CD8-positive, alpha-beta memory T cell (primary cell): ENCODE measurements at regions of chr12 and their contacts with region 1.

Region 1: DNA sequence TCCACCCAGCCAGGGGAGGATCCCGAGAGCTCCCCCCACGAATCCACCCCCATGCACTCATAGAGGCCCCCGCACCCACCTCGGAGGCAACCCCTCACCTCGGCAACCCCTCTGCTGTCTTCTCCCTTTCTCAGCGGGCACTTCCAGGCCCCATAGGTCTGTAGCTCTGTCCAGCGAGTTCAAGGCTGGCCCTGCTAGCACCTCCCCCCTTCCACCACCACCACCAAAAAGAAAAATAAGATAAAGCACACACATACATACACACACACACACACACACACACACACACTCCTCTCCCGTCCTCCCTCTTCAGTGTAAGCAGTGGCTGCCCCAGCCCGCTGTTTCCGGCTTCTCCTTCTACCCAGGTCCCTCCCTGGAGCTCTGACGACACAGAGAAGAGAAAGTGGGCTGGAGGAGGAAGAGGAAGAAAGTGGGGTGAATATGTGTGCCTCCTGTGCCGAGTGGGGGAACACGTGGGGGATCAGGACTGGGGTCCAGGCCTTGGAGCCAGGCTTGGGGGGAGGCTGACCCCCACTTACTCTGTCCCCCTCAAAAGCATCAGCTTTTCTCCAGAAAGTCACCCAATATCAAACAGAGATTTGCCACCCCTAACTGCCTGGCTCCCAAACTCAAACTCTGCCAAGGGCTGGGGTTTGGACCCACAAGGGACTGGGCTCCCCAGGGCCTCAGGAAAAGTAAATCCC is at the start of gene STAT6:
- DNase-seq: peak; percentile 76 to 93 (median 88)
- H3K4me3 ChIP-seq: peak within 1 kb of the TSS; percentile 99
- H3K4me3 Mint-ChIP-seq: peak within 1 kb of the TSS; percentile 96 to 100 (median 99)
- H3K27ac ChIP-seq: peak within 1 kb of the TSS; percentile 96
- H3K27ac Mint-ChIP-seq: peak within 1 kb of the TSS; percentile 95 to 100 (median 98)
- H3K4me1 ChIP-seq: peaks cover 32% of the 10 kb centered on the region
- H3K4me1 Mint-ChIP-seq: peaks cover 38 to 53% (median 50%) of the 10 kb centered on the region in 3 donors
- H3K27me3 ChIP-seq: no peaks in the 10 kb centered on the region
- H3K27me3 Mint-ChIP-seq: peaks cover 0 to 9% of the 10 kb centered on the region in 2 donors
- total RNA-seq, gene STAT6: 262 to 265 TPM

Region 2: GRCh38 chr12:56839915-56840325 is 271.3 kb before region 1 on chr12:
- CTCF ChIA-PET with region 1: no interaction called
- POLR2A ChIA-PET with region 1: no interaction called
- DNase-seq: peak in 1 of 5 donors; percentile 4
- H3K4me3 ChIP-seq: no peak overlapping the region
- H3K4me3 Mint-ChIP-seq: no peak overlapping the region
- H3K27ac ChIP-seq: no peak overlapping the region
- H3K27ac Mint-ChIP-seq: peak overlapping the region in 1 of 8 donors; percentile 33
- H3K4me1 ChIP-seq: peaks cover 14% of the 10 kb centered on the region
- H3K4me1 Mint-ChIP-seq: peaks cover 15 to 17% (median 16%) of the 10 kb centered on the region in 3 donors
- H3K27me3 ChIP-seq: no peaks in the 10 kb centered on the region
- H3K27me3 Mint-ChIP-seq: peaks cover 7 to 9% of the 10 kb centered on the region in 2 donors

Region 3: GRCh38 chr12:57005980-57006808 is 105.0 kb before region 1 on chr12 and contains the start of gene ZBTB39:
- CTCF ChIA-PET with region 1: interaction called, 19 read pairs
- POLR2A ChIA-PET with region 1: interaction called, 10 read pairs
- DNase-seq: peak; percentile 61 to 78 (median 65)
- H3K4me3 ChIP-seq: peak within 1 kb of the TSS; percentile 66
- H3K4me3 Mint-ChIP-seq: peak within 1 kb of the TSS; percentile 88 to 96 (median 92)
- H3K27ac ChIP-seq: peak within 1 kb of the TSS; percentile 55
- H3K27ac Mint-ChIP-seq: peak within 1 kb of the TSS; percentile 84 to 96 (median 90)
- H3K4me1 ChIP-seq: peaks cover 56% of the 10 kb centered on the region
- H3K4me1 Mint-ChIP-seq: peaks cover 47 to 68% (median 63%) of the 10 kb centered on the region in 3 donors
- H3K27me3 ChIP-seq: no peaks in the 10 kb centered on the region
- H3K27me3 Mint-ChIP-seq: no peaks in the 10 kb centered on the region
- total RNA-seq, gene ZBTB39: 9.1 to 9.3 TPM

Region 4: DNA sequence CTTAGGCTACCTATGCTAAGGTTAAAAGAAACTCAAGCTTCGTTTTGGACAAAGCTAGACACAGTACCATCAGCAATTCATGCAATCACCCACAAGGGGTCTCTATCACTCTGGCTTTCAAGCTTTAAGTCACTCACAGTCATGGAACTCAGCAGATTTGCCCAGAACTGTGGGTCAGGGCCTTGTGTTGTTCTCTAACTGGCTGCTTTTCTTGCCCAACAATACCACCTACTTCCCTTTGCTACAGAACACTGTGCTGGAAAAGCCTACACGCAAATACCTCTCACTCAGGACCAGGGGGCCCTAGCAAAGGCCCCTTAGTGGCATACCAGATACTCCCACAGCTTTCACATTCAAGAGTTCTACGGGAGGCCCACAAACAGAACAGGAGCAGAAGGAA is 41.7 kb before region 1 on chr12:
- CTCF ChIA-PET with region 1: interaction called, 183 read pairs
- POLR2A ChIA-PET with region 1: interaction called, 75 read pairs
- DNase-seq: peak; percentile 33 to 75 (median 63)
- H3K4me3 ChIP-seq: no peak overlapping the region
- H3K4me3 Mint-ChIP-seq: peak overlapping the region in 2 of 7 donors; percentile 1 to 21
- H3K27ac ChIP-seq: no peak overlapping the region
- H3K27ac Mint-ChIP-seq: peak overlapping the region; percentile 64 to 97 (median 75)
- H3K4me1 ChIP-seq: peaks cover 19% of the 10 kb centered on the region
- H3K4me1 Mint-ChIP-seq: peaks cover 10 to 28% (median 20%) of the 10 kb centered on the region in 3 donors
- H3K27me3 ChIP-seq: no peaks in the 10 kb centered on the region
- H3K27me3 Mint-ChIP-seq: no peaks in the 10 kb centered on the region

Region 5: GRCh38 chr12:57088459-57089248 is 22.5 kb before region 1 on chr12 and contains the start of gene NAB2:
- CTCF ChIA-PET with region 1: interaction called, 195 read pairs
- POLR2A ChIA-PET with region 1: interaction called, 131 read pairs
- DNase-seq: peak; percentile 90 to 96 (median 93)
- H3K4me3 ChIP-seq: peak within 1 kb of the TSS; percentile 92
- H3K4me3 Mint-ChIP-seq: peak within 1 kb of the TSS; percentile 92 to 98 (median 94)
- H3K27ac ChIP-seq: peak within 1 kb of the TSS; percentile 93
- H3K27ac Mint-ChIP-seq: peak within 1 kb of the TSS; percentile 91 to 100 (median 99)
- H3K4me1 ChIP-seq: peaks cover 35% of the 10 kb centered on the region
- H3K4me1 Mint-ChIP-seq: peaks cover 44 to 61% (median 52%) of the 10 kb centered on the region in 3 donors
- H3K27me3 ChIP-seq: no peaks in the 10 kb centered on the region
- H3K27me3 Mint-ChIP-seq: no peaks in the 10 kb centered on the region
- total RNA-seq, gene NAB2: 37.7 to 40.1 TPM

Region 6: GRCh38 chr12:57124259-57124877 is 13.2 kb after region 1 on chr12:
- CTCF ChIA-PET with region 1: interaction called, 63 read pairs
- POLR2A ChIA-PET with region 1: interaction called, 9 read pairs
- DNase-seq: peak; percentile 64 to 84 (median 70)
- H3K4me3 ChIP-seq: no peak overlapping the region
- H3K4me3 Mint-ChIP-seq: peak overlapping the region in 2 of 7 donors; percentile 6 to 7
- H3K27ac ChIP-seq: no peak overlapping the region
- H3K27ac Mint-ChIP-seq: peak overlapping the region in 1 of 8 donors; percentile 0
- H3K4me1 ChIP-seq: peaks cover 11% of the 10 kb centered on the region
- H3K4me1 Mint-ChIP-seq: peaks cover 5 to 11% (median 6%) of the 10 kb centered on the region in 3 donors
- H3K27me3 ChIP-seq: no peaks in the 10 kb centered on the region
- H3K27me3 Mint-ChIP-seq: peaks cover 0 to 9% of the 10 kb centered on the region in 2 donors

Region 7: GRCh38 chr12:57151741-57152630 is 40.8 kb after region 1 on chr12:
- CTCF ChIA-PET with region 1: no interaction called
- POLR2A ChIA-PET with region 1: no interaction called
- DNase-seq: no peak
- H3K4me3 ChIP-seq: no peak overlapping the region
- H3K4me3 Mint-ChIP-seq: no peak overlapping the region
- H3K27ac ChIP-seq: no peak overlapping the region
- H3K27ac Mint-ChIP-seq: peak overlapping the region in 1 of 8 donors; percentile 89
- H3K4me1 ChIP-seq: no peaks in the 10 kb centered on the region
- H3K4me1 Mint-ChIP-seq: peaks cover 0 to 2% (median 2%) of the 10 kb centered on the region in 3 donors
- H3K27me3 ChIP-seq: no peaks in the 10 kb centered on the region
- H3K27me3 Mint-ChIP-seq: peaks cover 7 to 9% of the 10 kb centered on the region in 2 donors